B cell (primary cell): ENCODE measurements at regions of chr3 and their contacts with region 1.

Region 1: GRCh38 chr3:115783938-115784738 is 160.8 kb downstream of the GAP43 start:
- DNase-seq: peak; percentile 94
- ATAC-seq: peak; percentile 81
- H3K4me3 ChIP-seq: peak overlapping the region in 4 of 5 experiments; percentile 60 to 74 (median 70)
- H3K4me3 Mint-ChIP-seq: peak overlapping the region; percentile 87
- H3K27ac ChIP-seq: peak overlapping the region; percentile 94 to 95
- H3K27ac Mint-ChIP-seq: peak overlapping the region; percentile 95
- H3K4me1 ChIP-seq: peaks cover 13 to 16% of the 10 kb centered on the region in 2 donors
- H3K4me1 Mint-ChIP-seq: peaks cover 15% of the 10 kb centered on the region
- H3K27me3 ChIP-seq: peaks cover 0 to 11% (median 4%) of the 10 kb centered on the region in 4 experiments
- H3K27me3 Mint-ChIP-seq: peaks cover 9% of the 10 kb centered on the region
- CTCF ChIP-seq: peak; percentile 95

Region 2: DNA sequence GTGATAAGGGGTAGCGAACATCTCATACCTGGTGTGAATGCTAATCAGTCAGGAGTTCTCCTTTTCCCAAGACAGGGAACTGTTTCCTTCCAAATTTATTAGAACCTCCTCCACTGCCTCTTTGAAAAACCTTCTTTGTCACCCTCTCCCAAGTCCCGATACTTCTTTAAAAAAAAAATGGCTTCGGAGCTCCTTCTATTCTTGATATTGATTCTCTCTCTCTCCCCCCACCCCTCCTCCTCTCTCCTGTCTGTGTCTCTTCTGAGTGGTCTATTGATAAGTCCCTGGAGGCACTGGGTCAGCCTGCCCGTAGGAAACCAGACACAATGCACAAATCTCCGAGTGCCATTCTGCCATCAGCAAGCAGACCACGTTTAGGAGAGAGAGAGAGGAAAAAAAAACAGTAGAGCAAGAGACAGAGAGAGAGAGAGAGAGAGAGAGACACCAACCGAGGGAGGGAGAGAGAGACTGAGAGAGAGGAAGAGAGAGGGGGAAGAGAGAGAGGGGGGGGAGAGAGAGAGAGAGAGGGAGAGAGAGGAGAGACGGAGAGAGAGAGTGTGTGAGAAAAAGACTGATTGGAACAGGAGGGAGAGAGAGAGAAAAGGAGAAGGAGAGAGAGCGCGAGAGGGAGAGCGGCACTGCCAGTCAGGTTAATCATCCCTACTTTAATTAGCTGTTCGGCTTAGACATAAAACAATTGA is 1329.4 kb before region 1 on chr3:
- CTCF ChIA-PET with region 1: no interaction called
- POLR2A ChIA-PET with region 1: no interaction called
- intact Hi-C with region 1: loop called (anchors 5 kb)
- DNase-seq: peak; percentile 67
- ATAC-seq: peak; percentile 14
- H3K4me3 ChIP-seq: peak overlapping the region; percentile 11 to 71 (median 53)
- H3K4me3 Mint-ChIP-seq: no peak overlapping the region
- H3K27ac ChIP-seq: peak overlapping the region; percentile 79 to 92
- H3K27ac Mint-ChIP-seq: no peak overlapping the region
- H3K4me1 ChIP-seq: peaks cover 47 to 55% of the 10 kb centered on the region in 2 donors
- H3K4me1 Mint-ChIP-seq: peaks cover 40% of the 10 kb centered on the region
- H3K27me3 ChIP-seq: no peaks in the 10 kb centered on the region
- H3K27me3 Mint-ChIP-seq: no peaks in the 10 kb centered on the region
- CTCF ChIP-seq: no peak

Region 3: DNA sequence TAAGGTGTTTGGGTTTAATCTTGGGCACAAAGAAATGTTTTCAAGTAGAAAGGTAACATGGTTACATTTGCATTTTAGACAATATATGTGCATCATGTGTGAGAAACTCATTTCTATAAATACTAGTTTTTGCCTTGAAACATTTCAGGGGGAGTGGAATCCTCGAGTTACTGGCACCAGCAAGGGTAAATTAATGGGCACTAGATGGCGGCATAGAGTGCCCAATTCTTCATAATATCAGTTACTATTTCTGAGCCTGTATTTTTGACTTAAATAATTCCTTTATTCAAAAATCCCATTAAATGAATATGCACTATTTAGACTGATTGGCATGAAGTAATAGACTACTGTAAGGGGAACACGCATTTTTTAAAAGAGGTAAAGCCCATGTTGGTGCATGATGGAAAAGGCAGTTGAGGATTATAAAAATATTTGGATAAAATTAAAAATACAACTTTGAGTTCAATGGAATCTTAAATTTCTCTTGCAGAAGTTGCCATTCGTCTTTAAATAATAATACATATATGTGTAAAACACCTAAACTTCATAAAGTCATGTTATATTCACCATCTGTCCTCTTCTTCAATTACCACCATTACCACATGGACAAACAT is 743.4 kb before region 1 on chr3:
- CTCF ChIA-PET with region 1: interaction called, 7 read pairs
- POLR2A ChIA-PET with region 1: no interaction called
- intact Hi-C with region 1: loop called (anchors 1 kb)
- DNase-seq: peak; percentile 55
- ATAC-seq: peak; percentile 41
- H3K4me3 ChIP-seq: no peak overlapping the region
- H3K4me3 Mint-ChIP-seq: no peak overlapping the region
- H3K27ac ChIP-seq: no peak overlapping the region
- H3K27ac Mint-ChIP-seq: no peak overlapping the region
- H3K4me1 ChIP-seq: no peaks in the 10 kb centered on the region
- H3K4me1 Mint-ChIP-seq: no peaks in the 10 kb centered on the region
- H3K27me3 ChIP-seq: no peaks in the 10 kb centered on the region
- H3K27me3 Mint-ChIP-seq: no peaks in the 10 kb centered on the region
- CTCF ChIP-seq: peak; percentile 85

Region 4: GRCh38 chr3:115147329-115148141 is 636.6 kb before region 1 on chr3:
- CTCF ChIA-PET with region 1: no interaction called
- POLR2A ChIA-PET with region 1: interaction called, 10 read pairs
- intact Hi-C with region 1: loop called (anchors 1 kb)
- DNase-seq: peak; percentile 100
- ATAC-seq: peak; percentile 74
- H3K4me3 ChIP-seq: peak overlapping the region; percentile 82 to 96 (median 86)
- H3K4me3 Mint-ChIP-seq: peak overlapping the region; percentile 90
- H3K27ac ChIP-seq: peak overlapping the region; percentile 97 to 99
- H3K27ac Mint-ChIP-seq: peak overlapping the region; percentile 97
- H3K4me1 ChIP-seq: peaks cover 11 to 20% of the 10 kb centered on the region in 2 donors
- H3K4me1 Mint-ChIP-seq: peaks cover 31% of the 10 kb centered on the region
- H3K27me3 ChIP-seq: no peaks in the 10 kb centered on the region
- H3K27me3 Mint-ChIP-seq: no peaks in the 10 kb centered on the region
- CTCF ChIP-seq: no peak

Region 5: GRCh38 chr3:115658337-115659181 is 125.6 kb before region 1 on chr3:
- CTCF ChIA-PET with region 1: interaction called, 5 read pairs
- POLR2A ChIA-PET with region 1: interaction called, 5 read pairs
- intact Hi-C with region 1: loop called (anchors 1 kb)
- DNase-seq: peak; percentile 86
- ATAC-seq: peak; percentile 97
- H3K4me3 ChIP-seq: peak overlapping the region; percentile 66 to 93 (median 70)
- H3K4me3 Mint-ChIP-seq: peak overlapping the region; percentile 94
- H3K27ac ChIP-seq: peak overlapping the region; percentile 88 to 93
- H3K27ac Mint-ChIP-seq: peak overlapping the region; percentile 100
- H3K4me1 ChIP-seq: peaks cover 14 to 33% of the 10 kb centered on the region in 2 donors
- H3K4me1 Mint-ChIP-seq: peaks cover 39% of the 10 kb centered on the region
- H3K27me3 ChIP-seq: no peaks in the 10 kb centered on the region
- H3K27me3 Mint-ChIP-seq: no peaks in the 10 kb centered on the region
- CTCF ChIP-seq: no peak

Region 6: DNA sequence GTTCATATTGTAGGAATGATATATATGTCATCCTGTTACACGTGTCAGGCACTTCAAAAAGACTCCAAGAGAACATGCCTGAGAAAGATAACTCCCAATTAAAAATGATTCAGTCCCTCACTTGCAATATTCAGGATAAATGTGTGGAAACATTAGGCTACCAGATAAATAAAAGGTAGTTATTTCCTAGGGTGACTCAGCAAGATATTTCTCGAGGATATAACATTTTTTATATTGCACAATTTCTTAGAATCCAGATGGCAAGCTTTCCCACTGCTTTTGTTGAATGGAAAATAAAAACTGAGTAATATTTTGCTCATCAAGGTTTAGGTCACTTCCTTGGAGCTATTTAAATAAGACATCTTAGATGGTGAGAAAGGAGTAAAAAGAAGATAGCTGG is 20.6 kb after region 1 on chr3:
- CTCF ChIA-PET with region 1: interaction called, 14 read pairs
- POLR2A ChIA-PET with region 1: no interaction called
- intact Hi-C with region 1: no loop called
- DNase-seq: no peak
- ATAC-seq: no peak
- H3K4me3 ChIP-seq: no peak overlapping the region
- H3K4me3 Mint-ChIP-seq: no peak overlapping the region
- H3K27ac ChIP-seq: no peak overlapping the region
- H3K27ac Mint-ChIP-seq: no peak overlapping the region
- H3K4me1 ChIP-seq: no peaks in the 10 kb centered on the region
- H3K4me1 Mint-ChIP-seq: no peaks in the 10 kb centered on the region
- H3K27me3 ChIP-seq: peaks cover 0 to 13% (median 4%) of the 10 kb centered on the region in 4 experiments
- H3K27me3 Mint-ChIP-seq: peaks cover 54% of the 10 kb centered on the region
- CTCF ChIP-seq: no peak

Region 7: DNA sequence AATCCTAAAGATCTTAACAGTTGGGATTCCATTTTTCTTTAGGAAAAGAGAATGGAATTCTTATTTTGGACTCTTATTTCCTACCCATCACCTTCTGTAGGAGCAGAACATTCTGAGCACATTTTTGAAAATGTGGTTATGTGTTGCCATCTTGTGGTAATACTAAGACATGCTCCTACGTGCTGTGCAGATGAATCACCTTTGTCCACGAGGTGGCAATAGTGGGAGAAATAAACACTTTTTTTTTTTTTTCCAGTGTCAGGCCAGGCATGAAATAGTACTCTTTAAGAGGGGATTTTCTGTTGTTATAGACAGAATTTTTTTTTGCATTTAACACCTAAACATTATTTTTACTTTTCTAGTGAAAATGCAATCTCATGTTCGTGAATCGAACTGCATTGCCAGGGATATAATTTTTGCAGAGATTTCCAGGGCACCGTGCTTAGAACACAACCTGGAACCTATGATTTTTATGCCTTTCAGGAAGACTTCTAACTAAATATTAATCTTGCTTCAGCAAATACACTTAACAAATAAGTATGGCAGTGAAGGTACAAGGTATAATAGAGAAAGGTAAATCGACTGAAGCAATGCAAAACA is 35.7 kb after region 1 on chr3:
- CTCF ChIA-PET with region 1: interaction called, 12 read pairs
- POLR2A ChIA-PET with region 1: no interaction called
- intact Hi-C with region 1: loop called (anchors 2 kb)
- DNase-seq: peak; percentile 84
- ATAC-seq: peak; percentile 90
- H3K4me3 ChIP-seq: no peak overlapping the region
- H3K4me3 Mint-ChIP-seq: no peak overlapping the region
- H3K27ac ChIP-seq: no peak overlapping the region
- H3K27ac Mint-ChIP-seq: no peak overlapping the region
- H3K4me1 ChIP-seq: no peaks in the 10 kb centered on the region
- H3K4me1 Mint-ChIP-seq: no peaks in the 10 kb centered on the region
- H3K27me3 ChIP-seq: no peaks in the 10 kb centered on the region
- H3K27me3 Mint-ChIP-seq: no peaks in the 10 kb centered on the region
- CTCF ChIP-seq: peak; percentile 99